Psoas muscle (tissue), 8 donors: ENCODE measurements at regions of chr9 and their contacts with region 1.

Region 1: DNA sequence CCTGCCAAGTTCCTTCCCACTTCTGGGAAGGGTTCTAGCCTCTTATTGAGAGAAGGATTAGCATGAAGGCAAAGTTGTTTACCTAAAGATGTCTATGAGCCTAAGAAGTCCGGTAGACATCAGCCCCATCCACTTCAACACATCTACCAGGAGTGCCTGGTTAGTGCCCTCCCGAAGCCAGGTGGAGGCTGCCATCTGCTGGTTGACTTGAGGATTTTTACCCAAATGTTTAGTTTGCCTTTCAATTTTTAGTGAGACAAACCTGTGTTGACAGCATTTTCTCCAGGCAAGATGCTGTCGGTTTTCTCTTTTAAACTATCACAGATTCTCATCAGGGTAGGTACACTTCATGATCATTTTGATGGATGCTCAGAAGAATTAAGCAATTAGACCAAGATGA is 83.6 kb upstream of the TNFSF8 start:
- DNase-seq: peak; percentile 56 to 77
- ATAC-seq: peak; percentile 61 to 74 (median 70)
- H3K4me3 ChIP-seq: no peak overlapping the region
- H3K27ac ChIP-seq: no peak overlapping the region
- H3K4me1 ChIP-seq: no peaks in the 10 kb centered on the region
- H3K27me3 ChIP-seq: peaks cover 0 to 5% (median 0%) of the 10 kb centered on the region in 3 donors
- CTCF ChIP-seq: peak; percentile 78

Region 2: GRCh38 chr9:114330636-114331035 is 683.4 kb before region 1 on chr9:
- intact Hi-C with region 1: no loop called
- DNase-seq: no peak
- ATAC-seq: no peak
- H3K4me3 ChIP-seq: no peak overlapping the region
- H3K27ac ChIP-seq: no peak overlapping the region
- H3K4me1 ChIP-seq: no peaks in the 10 kb centered on the region
- H3K27me3 ChIP-seq: peaks cover 0 to 2% (median 0%) of the 10 kb centered on the region in 3 donors
- CTCF ChIP-seq: no peak

Region 3: GRCh38 chr9:114405294-114406034 is 608.5 kb before region 1 on chr9:
- intact Hi-C with region 1: loop called (anchors 2 to 5 kb)
- DNase-seq: peak; percentile 70 to 80
- ATAC-seq: peak; percentile 91 to 99 (median 92)
- H3K4me3 ChIP-seq: no peak overlapping the region
- H3K27ac ChIP-seq: no peak overlapping the region
- H3K4me1 ChIP-seq: no peaks in the 10 kb centered on the region
- H3K27me3 ChIP-seq: no peaks in the 10 kb centered on the region
- CTCF ChIP-seq: peak; percentile 77

Region 4: DNA sequence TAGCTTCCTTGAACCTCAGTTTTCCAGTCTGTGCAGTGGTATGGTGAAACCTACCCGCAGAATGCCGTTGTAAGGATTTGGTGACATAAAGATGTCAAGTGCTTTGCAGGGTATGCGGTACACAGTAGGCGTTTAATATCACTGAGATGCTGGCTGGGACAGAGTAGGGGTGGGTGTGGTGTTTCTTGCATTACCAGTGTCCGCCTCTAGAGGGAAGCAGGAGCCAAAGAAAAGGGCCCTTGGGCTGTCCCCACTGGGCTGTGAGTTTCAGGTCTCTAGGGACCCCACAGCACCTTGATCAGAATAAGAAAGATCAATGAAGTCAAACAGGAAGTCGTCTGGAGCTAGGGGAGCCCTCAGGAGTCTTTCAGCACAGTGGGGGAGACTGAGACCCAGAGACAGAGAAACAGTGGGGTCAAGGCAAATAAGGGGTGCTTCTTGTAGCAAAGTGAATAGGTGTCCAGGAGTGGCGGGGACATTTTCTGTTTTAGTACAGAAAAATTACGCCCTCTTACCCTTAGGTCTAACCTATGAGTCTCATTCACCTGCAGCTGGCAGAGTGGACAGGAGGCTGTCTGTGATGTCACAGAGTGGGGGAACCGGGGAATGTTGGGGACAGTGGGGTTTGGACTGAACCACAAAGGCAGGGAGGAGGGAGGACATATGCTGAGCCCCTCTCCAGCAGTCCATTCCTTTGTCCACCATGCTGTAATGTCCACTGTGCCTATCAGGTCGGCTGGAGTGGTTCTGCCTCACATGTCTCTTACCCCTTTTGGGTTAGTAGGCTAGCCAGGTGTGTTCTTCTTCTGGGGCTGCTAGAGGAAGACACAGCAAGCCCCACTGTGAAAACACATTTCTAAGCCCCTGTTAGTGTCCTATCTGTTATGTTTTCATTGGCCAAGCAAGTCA is 351.7 kb before region 1 on chr9:
- intact Hi-C with region 1: loop called in 1 of 2 experiments (anchors 5 kb)
- DNase-seq: no peak
- ATAC-seq: peak; percentile 58 to 72 (median 69)
- H3K4me3 ChIP-seq: no peak overlapping the region
- H3K27ac ChIP-seq: no peak overlapping the region
- H3K4me1 ChIP-seq: no peaks in the 10 kb centered on the region
- H3K27me3 ChIP-seq: no peaks in the 10 kb centered on the region
- CTCF ChIP-seq: peak; percentile 72

Region 5: GRCh38 chr9:114681594-114682332 is 332.2 kb before region 1 on chr9 and contains the start of gene TEX48:
- intact Hi-C with region 1: loop called (anchors 5 to 10 kb)
- DNase-seq: peak; percentile 21 to 57
- ATAC-seq: peak in 3 of 4 donors; percentile 48 to 64 (median 57)
- H3K4me3 ChIP-seq: no peak within 1 kb of the TSS
- H3K27ac ChIP-seq: no peak within 1 kb of the TSS
- H3K4me1 ChIP-seq: no peaks in the 10 kb centered on the region
- H3K27me3 ChIP-seq: peaks cover 0 to 13% (median 3%) of the 10 kb centered on the region in 3 donors
- CTCF ChIP-seq: peak; percentile 56
- total RNA-seq, gene TEX48: not detected

Region 6: GRCh38 chr9:114738581-114739316 is 275.2 kb before region 1 on chr9:
- intact Hi-C with region 1: loop called (anchors 2 to 5 kb)
- DNase-seq: peak; percentile 44 to 66
- ATAC-seq: peak; percentile 61 to 81 (median 80)
- H3K4me3 ChIP-seq: no peak overlapping the region
- H3K27ac ChIP-seq: no peak overlapping the region
- H3K4me1 ChIP-seq: no peaks in the 10 kb centered on the region
- H3K27me3 ChIP-seq: no peaks in the 10 kb centered on the region
- CTCF ChIP-seq: peak; percentile 86

Region 7: DNA sequence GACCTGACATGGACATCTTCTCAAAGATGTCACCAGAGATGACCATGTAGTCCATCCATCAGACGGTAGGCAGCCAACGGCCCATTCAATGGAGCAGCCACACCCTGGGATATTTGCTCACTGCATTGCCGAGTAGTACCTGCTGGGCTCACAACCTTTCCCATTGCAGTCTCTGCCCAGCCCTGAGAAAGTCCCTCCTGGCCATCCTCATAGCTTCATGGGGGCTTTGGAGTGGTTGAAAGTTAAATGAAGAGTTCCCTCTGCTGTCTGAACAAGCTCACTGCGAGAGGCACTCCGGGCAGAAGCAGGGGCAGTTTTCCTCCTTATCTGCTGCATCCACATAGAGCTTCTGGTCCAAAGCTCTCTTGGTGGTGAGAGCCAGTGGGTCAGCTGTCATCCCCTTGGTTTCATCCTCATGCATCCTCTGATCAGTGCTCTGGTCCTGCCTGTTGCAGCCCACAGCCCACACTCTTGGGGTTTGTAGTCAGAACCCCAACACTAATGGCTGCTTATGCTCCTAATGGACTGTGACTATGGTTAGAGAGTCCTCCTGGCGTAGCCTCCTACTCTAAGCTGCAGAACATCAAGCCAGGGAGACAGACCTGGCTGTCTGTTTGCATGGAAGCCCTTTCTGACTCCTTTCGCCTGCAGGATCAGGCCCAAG is 107.0 kb before region 1 on chr9:
- intact Hi-C with region 1: loop called in 1 of 2 experiments (anchors 5 kb)
- DNase-seq: no peak
- ATAC-seq: no peak
- H3K4me3 ChIP-seq: no peak overlapping the region
- H3K27ac ChIP-seq: no peak overlapping the region
- H3K4me1 ChIP-seq: no peaks in the 10 kb centered on the region
- H3K27me3 ChIP-seq: peaks cover 0 to 3% (median 0%) of the 10 kb centered on the region in 3 donors
- CTCF ChIP-seq: peak; percentile 28

Region 8: DNA sequence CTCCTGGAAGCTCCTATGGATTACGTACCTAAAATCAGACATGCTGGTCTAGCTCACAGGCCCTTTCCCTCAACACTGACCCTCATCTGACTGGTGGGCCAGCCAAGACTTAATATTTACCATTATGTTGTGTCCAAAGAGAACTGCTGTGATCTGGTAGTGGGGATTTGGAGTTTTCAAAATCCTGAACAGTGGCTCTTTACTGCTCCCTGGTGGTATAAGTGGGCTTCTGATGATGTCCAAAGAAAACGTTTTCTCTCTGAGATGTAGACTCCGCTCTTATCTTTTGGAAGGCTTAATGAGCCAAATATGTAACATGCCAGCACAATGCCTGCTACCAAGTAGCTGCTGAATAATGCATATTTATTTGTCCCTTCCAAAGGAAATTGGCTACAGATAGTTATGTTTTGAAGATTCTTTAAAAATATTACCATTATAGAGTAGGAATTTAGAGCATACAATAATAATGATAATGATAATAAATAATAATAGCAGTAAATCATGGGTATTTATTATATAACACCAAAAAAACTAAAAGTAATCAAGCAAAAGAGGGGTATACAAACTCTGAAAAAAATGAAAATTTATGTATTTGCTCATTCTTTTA is 510.6 kb after region 1 on chr9:
- intact Hi-C with region 1: loop called in 1 of 2 experiments (anchors 10 kb)
- DNase-seq: no peak
- ATAC-seq: no peak
- H3K4me3 ChIP-seq: no peak overlapping the region
- H3K27ac ChIP-seq: no peak overlapping the region
- H3K4me1 ChIP-seq: no peaks in the 10 kb centered on the region
- H3K27me3 ChIP-seq: no peaks in the 10 kb centered on the region
- CTCF ChIP-seq: peak; percentile 57